OCI-LY7 (cell line): ENCODE measurements at regions of chr12 and their contacts with region 1.

Region 1: DNA sequence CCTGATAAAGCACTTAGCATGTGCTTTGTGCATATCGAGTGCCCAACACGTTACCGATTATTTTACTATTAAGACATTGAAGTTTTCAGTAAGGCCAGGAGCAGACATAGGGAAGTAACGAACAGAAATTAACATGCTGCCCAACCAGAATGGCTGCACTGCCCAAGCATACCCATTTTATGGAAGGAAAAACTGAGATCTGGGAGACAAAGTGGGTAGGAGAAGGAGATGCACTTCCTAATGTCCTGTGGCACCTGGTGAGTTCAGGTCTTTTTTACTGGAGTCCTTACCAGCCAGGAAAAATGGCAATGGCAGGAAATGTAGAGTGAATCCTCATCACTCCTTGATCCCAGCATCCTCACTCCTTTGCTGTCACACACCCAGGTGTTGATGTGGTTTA is 768.5 kb downstream of the MED13L start:
- DNase-seq: no peak
- H3K4me3 ChIP-seq: no peak overlapping the region
- H3K27ac ChIP-seq: no peak overlapping the region
- H3K4me1 ChIP-seq: no peaks in the 10 kb centered on the region
- CTCF ChIP-seq: no peak

Region 2: DNA sequence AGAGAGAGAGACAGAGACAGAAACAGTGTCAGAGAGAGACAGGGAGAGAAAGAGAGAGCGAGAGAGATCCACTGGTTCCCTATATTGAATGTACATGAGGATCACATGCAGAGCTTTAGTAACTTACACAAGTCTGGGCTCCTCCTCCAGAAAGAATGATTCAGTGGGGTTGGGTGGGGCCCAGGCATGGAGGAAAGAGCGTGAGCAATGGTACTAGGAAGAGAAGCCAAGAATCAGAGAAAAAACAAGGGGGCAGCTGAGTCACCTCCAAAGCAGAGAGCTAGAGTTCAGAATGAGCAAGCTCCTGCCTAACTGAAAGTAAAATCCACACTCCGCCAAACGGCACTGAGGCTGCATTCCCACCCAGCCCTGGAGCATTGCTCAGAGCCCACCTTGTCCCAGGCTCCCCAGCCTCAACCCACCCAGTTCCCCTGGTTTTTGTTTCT is 155.0 kb before region 1 on chr12:
- CTCF ChIA-PET with region 1: no interaction called
- POLR2A ChIA-PET with region 1: no interaction called
- intact Hi-C with region 1: no loop called
- DNase-seq: no peak
- H3K4me3 ChIP-seq: no peak overlapping the region
- H3K27ac ChIP-seq: no peak overlapping the region
- H3K4me1 ChIP-seq: no peaks in the 10 kb centered on the region
- CTCF ChIP-seq: no peak

Region 3: GRCh38 chr12:115528466-115528865 is 19.5 kb after region 1 on chr12:
- CTCF ChIA-PET with region 1: no interaction called
- POLR2A ChIA-PET with region 1: no interaction called
- intact Hi-C with region 1: loop called (anchors 1 kb)
- DNase-seq: no peak
- H3K4me3 ChIP-seq: no peak overlapping the region
- H3K27ac ChIP-seq: no peak overlapping the region
- H3K4me1 ChIP-seq: no peaks in the 10 kb centered on the region
- CTCF ChIP-seq: no peak